Heart right ventricle (tissue), 16 donors: ENCODE measurements at regions of chr12 and their contacts with region 1.

Region 1: GRCh38 chr12:66409195-66409871 is 107.0 kb downstream of the HELB start:
- DNase-seq: peak in 1 of 2 donors; percentile 18
- ATAC-seq: peak in 6 of 8 donors; percentile 31 to 74 (median 48)
- H3K4me3 ChIP-seq: no peak overlapping the region
- H3K27ac ChIP-seq: no peak overlapping the region
- H3K4me1 ChIP-seq: peaks cover 0 to 5% (median 0%) of the 10 kb centered on the region in 9 donors
- H3K27me3 ChIP-seq: peaks cover 0 to 3% (median 0%) of the 10 kb centered on the region in 7 donors
- CTCF ChIP-seq: peak; percentile 34 to 79 (median 74)

Region 2: DNA sequence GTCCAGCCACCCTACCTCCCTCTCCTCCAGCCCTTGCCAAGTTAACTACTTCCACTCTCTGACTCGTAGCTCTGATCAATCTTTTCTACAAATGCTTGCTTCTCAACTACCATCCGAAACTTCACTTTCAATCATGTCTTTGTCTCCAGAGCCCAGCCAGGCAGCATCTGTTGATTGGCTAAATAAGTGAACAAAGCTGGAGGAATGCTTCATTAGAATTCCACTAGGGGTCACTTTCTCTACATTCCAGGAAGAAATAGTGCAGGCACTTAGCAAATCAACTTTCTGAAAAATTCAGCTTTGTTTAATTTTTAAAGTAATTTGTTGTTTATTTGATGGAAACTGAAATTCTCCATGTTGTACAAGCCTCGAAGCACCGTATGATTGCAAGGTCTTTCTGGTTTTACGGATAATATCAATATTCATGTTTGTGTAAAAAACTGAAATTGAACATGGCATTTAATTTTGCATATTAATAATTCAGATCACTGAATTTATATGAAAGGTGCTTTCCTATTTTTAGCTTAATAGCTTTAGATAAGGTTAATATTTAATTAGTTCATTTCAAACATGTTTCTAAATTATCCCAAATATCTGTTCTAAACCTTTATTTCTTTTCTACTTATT is 139.5 kb before region 1 on chr12:
- intact Hi-C with region 1: loop called in 8 of 10 experiments (anchors 5 to 10 kb)
- DNase-seq: no peak
- ATAC-seq: peak in 2 of 8 donors; percentile 30 to 58
- H3K4me3 ChIP-seq: no peak overlapping the region
- H3K27ac ChIP-seq: peak overlapping the region in 1 of 10 donors; percentile 82
- H3K4me1 ChIP-seq: peaks cover 0 to 34% (median 0%) of the 10 kb centered on the region in 9 donors
- H3K27me3 ChIP-seq: peaks cover 0 to 7% (median 0%) of the 10 kb centered on the region in 7 donors
- CTCF ChIP-seq: peak; percentile 17 to 71 (median 59)

Region 3: DNA sequence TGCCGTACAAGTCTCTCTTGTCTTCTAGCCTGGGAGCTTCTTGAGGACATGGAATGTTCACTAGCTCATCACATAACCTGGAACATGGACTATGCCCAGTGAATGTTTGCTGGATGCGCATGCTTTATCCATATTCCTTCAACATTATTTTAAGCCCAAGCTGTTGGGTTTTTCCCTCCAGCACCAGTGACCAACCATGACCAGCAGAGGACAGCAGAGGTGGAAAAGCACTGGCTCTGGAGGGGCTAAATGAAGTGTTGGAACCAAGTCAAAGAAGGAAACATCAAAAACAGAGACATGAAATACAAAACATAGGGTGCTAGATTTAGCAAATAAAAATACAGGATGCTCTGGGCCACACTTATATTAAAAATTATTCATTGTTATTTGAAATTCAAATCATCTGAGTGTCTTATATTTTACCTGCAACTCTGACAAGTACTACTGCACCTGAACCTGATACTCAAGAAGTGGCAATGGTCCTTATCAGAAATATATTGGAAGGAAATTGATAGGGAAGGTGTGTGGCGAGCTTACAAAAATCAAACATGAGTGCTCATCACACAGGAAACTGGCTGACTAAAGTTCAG is 130.1 kb before region 1 on chr12:
- intact Hi-C with region 1: loop called in 9 of 10 experiments (anchors 2 to 10 kb)
- DNase-seq: no peak
- ATAC-seq: no peak
- H3K4me3 ChIP-seq: no peak overlapping the region
- H3K27ac ChIP-seq: no peak overlapping the region
- H3K4me1 ChIP-seq: peaks cover 0 to 19% (median 0%) of the 10 kb centered on the region in 9 donors
- H3K27me3 ChIP-seq: peaks cover 0 to 4% (median 0%) of the 10 kb centered on the region in 7 donors
- CTCF ChIP-seq: peak in 7 of 9 donors; percentile 42 to 68 (median 48)

Region 4: DNA sequence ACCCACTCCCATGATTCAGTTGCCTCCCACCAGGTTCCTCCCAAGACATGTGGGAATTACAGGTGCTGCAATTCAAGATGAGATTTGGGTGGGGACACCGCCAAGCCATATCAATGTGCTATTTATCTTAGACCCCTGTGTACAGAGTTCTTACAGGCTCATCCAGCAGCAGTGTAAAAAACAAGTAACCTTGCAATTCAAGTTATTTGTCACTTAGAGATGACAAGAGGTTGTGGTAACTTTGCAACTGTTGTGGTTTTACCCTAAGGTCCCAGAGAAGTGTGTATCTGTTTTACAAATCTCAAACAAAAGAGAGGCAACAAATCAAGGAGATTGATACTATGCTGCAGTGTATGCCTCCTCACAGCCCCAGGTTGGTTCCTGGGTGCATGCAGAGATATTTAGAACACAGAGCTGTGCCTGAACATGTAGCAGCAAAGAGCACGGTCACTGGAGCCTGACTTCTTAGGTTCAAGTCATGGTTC is 118.6 kb before region 1 on chr12:
- intact Hi-C with region 1: no loop called
- DNase-seq: no peak
- ATAC-seq: no peak
- H3K4me3 ChIP-seq: no peak overlapping the region
- H3K27ac ChIP-seq: peak overlapping the region in 1 of 10 donors; percentile 42
- H3K4me1 ChIP-seq: peaks cover 0 to 11% (median 0%) of the 10 kb centered on the region in 9 donors
- H3K27me3 ChIP-seq: no peaks in the 10 kb centered on the region
- CTCF ChIP-seq: no peak